Activated naive CD4-positive, alpha-beta T cell treated with anti-CD3 and anti-CD28 coated beads for 36 hours (primary cell): ENCODE measurements at regions of chr7 and their contacts with region 1.

Region 1: GRCh38 chr7:923108-924041 is 31.1 kb downstream of the ADAP1 start:
- DNase-seq: peak; percentile 98
- H3K4me3 Mint-ChIP-seq: peak overlapping the region; percentile 78
- H3K27ac Mint-ChIP-seq: peak overlapping the region; percentile 91
- H3K4me1 Mint-ChIP-seq: peaks cover 43% of the 10 kb centered on the region
- H3K27me3 Mint-ChIP-seq: no peaks in the 10 kb centered on the region

Region 2: GRCh38 chr7:909358-910329 is 13.7 kb before region 1 on chr7:
- CTCF ChIA-PET with region 1: interaction called, 13 read pairs
- intact Hi-C with region 1: loop called (anchors 1 kb)
- DNase-seq: peak; percentile 40
- H3K4me3 Mint-ChIP-seq: peak overlapping the region; percentile 32
- H3K27ac Mint-ChIP-seq: no peak overlapping the region
- H3K4me1 Mint-ChIP-seq: peaks cover 12% of the 10 kb centered on the region
- H3K27me3 Mint-ChIP-seq: no peaks in the 10 kb centered on the region

Region 3: GRCh38 chr7:939843-940242 is 16.5 kb after region 1 on chr7:
- CTCF ChIA-PET with region 1: interaction called, 5 read pairs
- intact Hi-C with region 1: loop called (anchors 1 kb)
- DNase-seq: no peak
- H3K4me3 Mint-ChIP-seq: no peak overlapping the region
- H3K27ac Mint-ChIP-seq: no peak overlapping the region
- H3K4me1 Mint-ChIP-seq: peaks cover 39% of the 10 kb centered on the region
- H3K27me3 Mint-ChIP-seq: no peaks in the 10 kb centered on the region